GM18951 (cell line): ENCODE measurements at regions of chr9 and their contacts with region 1.

Region 1: DNA sequence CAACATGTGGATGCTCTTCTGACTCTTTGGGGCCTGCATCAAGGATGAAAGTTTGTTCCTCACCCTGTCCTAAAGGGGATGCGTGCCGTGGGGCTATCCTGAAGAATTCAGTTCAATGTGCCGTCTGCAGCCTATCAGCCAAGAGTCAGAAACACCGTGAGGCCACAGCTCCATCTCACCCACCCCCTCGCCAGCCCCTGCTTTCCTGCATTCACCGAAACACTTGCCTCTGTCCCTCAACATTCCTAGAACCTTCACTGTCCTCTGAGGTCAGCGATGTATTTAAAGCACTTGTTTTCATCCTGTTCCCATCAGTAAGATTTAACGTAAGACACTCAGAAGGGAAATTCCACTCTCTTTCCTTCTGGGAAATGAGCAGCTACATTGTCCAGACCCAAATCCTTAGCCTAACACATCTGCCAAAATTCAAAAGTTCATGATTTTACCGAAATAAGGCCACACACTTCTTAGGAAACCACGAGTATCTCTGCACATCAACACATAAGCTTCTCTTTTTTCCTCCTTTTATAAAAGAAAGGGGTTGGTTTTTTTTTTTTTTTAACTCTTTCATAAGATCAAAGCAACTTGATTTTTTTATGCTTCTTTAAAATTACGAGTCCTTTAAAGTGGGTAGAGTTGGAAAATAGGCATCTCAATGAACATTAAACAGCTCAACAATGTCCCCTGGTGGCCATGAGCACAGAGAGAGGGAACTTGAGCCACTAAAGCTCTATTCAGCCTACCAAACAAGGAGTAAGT is 100.7 kb downstream of the SUSD1 start:
- POLR2A ChIP-seq: no peak

Region 2: DNA sequence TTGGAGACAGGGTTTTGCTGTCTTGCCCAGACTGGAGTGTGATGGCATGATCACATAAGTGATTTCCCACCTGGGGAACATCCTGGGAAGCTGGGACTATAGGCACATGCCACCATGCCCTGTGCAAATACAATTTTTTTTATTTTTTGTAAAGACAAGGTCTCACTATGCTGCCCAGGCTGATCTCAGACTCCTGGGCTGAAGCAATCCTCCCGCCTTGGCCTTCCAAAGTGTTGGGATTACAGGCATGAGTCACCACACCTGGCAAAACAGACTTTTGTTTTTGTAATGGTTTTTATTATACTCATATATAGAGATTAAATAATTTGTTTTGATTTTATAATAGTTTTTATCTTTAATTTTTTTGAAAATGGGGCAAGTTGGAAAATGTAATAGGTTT is 428.6 kb before region 1 on chr9:
- in situ Hi-C with region 1: no loop called
- POLR2A ChIP-seq: no peak

Region 3: DNA sequence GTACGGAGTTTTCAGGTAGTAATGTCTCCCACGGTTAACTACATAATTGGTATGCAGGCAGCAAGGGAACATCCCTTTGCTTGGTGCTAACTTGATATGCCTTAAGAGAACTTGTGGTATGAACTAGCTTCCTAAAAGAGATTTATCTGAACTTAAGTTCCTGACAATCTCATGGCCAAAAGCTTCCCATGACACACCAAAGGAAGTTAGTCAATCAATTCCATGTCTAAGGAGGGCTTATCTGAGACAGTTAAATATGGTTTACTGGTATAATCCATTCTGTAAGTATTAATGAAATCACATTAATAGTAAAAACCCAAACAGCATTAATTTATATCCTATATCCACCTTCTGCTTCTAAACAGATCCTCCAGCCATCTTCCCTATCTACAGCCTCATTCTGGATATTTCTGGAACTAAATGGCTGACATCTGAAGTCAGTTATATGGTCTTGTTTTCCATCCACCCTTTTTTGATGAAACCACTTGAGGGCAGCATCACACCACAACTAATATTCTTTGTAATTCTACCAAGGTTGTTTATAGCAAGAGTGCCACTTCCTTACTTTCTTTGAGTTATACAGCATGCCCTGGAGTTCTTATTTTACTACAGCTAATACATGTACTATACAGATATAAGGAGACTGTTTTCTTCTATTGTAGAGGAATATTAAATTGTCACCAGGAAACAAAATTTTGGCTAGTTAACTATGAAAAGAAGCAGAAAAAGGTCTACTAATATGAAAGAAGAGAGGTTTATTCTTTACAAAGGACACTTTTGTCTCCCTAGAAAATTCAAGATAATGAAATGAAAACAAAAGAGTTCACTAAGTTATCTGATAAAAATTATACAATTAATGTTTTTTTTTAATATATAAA is 314.4 kb before region 1 on chr9:
- in situ Hi-C with region 1: loop called (anchors 10 kb)
- POLR2A ChIP-seq: no peak

Region 4: DNA sequence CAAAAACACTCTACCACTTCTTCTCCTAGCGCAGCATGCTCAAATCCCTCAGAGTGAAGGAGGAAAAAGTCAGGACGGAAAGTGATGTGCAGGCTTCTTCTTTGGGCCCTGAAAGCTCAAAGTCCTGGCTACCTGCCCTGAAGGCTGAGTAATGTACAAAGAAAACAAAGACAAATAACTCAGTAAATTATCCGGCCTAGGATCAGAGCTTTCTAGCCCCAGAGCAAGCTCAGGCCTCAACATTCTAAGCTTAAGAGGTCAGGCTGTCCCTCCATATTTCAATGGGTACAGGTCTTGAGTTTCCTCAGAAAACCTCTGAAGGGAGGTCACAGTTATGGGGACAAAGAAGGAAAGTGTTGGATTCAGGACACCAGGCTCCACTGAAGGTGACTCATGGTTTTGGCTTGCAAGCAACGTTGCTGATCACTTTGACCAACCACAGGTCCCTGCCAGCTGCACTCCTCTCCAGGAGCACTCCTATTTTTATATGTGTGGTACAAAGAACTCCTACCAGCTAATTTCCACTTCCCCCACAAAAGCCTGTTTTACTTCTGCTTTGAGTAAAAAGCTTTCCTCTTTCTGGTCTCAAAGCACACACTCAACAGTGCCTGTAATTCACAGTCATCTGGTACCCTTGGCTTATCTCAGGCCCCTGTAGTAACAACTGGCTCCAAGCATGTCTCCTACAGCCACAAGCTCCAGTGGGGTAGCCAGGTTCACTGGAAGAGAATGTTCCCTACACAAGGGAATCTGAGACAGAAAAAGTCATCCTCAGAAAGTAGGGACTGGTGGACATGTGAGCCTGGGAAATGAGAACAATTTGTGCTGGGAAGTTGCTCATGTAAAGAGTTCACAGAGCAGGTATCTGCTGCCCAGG is 62.2 kb before region 1 on chr9:
- in situ Hi-C with region 1: no loop called
- POLR2A ChIP-seq: no peak